BJ (cell line): ENCODE measurements at regions of chr17 and their contacts with region 1.

Region 1: DNA sequence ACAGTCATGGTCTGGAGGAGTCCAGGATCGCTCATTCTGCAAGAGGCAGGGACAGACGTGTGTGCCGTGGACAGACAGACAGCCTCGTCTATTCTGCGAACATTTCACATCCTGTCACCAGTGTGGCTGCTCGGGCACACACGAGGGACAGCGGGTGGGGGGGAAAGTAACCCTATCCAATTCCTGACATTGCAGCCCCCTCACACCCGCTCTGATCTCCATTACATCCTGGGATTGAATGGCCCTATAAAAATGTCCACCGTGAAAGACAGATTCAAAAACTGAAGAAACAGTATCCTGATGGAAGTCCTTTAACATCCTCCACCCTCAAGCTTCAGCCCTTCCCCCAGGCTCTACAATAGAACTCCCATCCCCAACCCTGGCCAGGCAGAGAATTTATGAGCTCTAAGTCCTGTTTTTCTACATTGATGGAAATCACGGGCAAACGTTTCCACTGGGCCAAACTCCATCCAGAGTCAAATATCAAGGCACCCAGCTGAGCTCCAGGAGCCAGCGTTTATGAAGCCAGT is 39.4 kb downstream of the HS3ST3A1 start:
- DNase-seq: no peak
- H3K4me3 ChIP-seq: no peak overlapping the region
- H3K27me3 ChIP-seq: no peaks in the 10 kb centered on the region
- CTCF ChIP-seq: no peak

Region 2: DNA sequence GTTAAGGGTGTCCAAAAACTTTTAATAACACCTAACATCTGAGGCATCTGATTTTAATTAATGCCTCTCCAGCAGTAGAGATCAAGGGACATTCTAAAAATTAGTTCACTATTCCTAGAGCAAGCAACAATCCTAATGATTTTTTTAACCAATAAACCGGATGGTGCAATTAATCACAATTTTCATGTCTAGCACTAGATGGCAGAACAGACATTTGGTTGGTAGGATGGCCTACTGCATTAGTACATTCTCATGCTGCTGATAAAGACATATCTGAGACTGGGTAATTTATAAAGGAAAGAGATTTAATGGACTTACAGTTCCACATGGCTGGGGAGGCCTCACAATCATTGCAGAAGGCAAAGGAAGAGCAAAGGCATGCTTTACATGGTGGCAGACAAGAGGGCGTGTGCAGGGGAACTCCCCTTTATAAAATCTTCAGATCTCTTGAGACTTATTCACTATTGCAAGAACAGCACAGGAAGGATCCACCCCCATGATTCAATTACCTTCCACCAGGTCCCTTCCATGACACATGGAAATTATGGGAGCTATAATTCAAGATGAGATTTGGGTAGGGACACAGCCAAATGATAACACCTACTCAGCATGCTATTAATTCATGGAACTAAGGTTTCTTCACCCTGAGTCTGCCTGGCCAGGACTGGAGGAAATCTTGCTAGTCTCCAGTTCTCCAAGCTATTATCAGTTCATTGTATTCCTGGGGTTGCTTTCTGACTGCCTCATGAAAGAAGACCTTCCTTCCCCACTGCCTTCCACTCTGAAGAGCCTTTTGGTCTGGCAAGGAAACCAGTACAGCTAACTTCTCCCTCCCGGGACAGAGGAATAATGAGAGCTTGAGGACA is 14.6 kb after region 1 on chr17:
- CTCF ChIA-PET with region 1: interaction called, 22 read pairs
- POLR2A ChIA-PET with region 1: no interaction called
- DNase-seq: no peak
- H3K4me3 ChIP-seq: no peak overlapping the region
- H3K27me3 ChIP-seq: no peaks in the 10 kb centered on the region
- CTCF ChIP-seq: no peak